H1 (cell line): ENCODE measurements at regions of chr17 and their contacts with region 1.

Region 1: DNA sequence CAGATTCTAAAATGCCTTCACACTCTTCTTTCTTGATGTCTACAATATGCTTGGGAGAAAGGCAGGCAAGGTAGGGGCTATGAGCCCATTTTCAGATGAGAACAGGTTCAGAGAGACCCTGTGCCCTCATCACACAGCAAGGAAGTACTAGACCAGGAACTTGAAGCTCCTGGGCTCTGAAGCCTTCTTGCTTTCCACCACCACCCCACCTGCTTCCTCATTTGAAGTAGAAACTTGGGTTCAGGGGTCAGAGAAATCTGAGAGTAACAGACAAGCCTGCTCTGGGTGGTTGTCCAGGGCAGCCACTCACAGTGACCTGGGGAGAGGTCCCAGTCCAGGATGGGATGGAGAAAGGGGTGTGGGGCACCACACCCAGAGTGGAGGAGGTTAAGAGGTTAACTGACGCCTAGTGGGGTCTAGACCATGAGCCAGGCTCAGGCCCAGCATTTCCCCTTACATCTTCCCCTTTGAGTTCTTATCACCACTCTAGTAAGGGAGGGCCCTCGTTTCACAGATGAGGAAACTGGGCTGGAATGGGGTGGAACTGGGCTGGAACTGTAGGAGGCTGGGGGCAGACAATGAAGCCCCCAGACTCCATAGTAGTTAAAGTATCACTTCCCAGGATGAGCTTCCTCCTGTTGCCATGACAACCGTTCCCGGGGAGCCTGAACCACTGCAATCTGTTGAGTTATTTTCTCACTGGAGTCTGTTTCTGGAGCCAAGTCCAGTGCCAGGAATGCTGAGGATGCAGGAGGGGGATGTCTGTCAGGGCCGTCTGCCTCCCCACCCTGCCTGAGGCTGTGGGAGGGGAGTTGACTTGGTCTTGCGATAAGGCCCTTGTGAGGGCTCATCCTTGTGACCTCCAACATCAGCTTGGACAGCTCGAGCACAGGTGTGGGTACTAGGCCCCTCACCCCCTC is 16.2 kb upstream of the PHF12 start:
- DNase-seq: no peak
- H3K4me3 ChIP-seq: no peak overlapping the region
- H3K27ac ChIP-seq: no peak overlapping the region
- H3K4me1 ChIP-seq: peaks cover 11 to 22% (median 17%) of the 10 kb centered on the region in 4 experiments
- H3K27me3 ChIP-seq: no peaks in the 10 kb centered on the region; a peak in 1 of 7 replicates
- CTCF ChIP-seq: no peak
- EP300 ChIP-seq: no peak
- POLR2A ChIP-seq: no peak
- RAD21 ChIP-seq: no peak

Region 2: GRCh38 chr17:28818819-28819221 is 148.7 kb before region 1 on chr17:
- CTCF ChIA-PET with region 1: no interaction called
- POLR2A ChIA-PET with region 1: no interaction called
- DNase-seq: no peak
- H3K4me3 ChIP-seq: no peak overlapping the region
- H3K27ac ChIP-seq: no peak overlapping the region
- H3K4me1 ChIP-seq: no peaks in the 10 kb centered on the region; a peak in 1 of 7 replicates
- H3K27me3 ChIP-seq: no peaks in the 10 kb centered on the region
- CTCF ChIP-seq: no peak
- EP300 ChIP-seq: no peak
- POLR2A ChIP-seq: no peak
- RAD21 ChIP-seq: no peak

Region 3: GRCh38 chr17:28951991-28952975 is 15.2 kb before region 1 on chr17:
- CTCF ChIA-PET with region 1: interaction called, 62 read pairs
- POLR2A ChIA-PET with region 1: interaction called, 10 read pairs
- DNase-seq: peak; percentile 89 to 96
- H3K4me3 ChIP-seq: peak overlapping the region; percentile 68 to 97 (median 84)
- H3K27ac ChIP-seq: peak overlapping the region; percentile 92
- H3K4me1 ChIP-seq: peaks cover 9 to 28% (median 14%) of the 10 kb centered on the region in 4 experiments; a peak in 5 of 7 replicates
- H3K27me3 ChIP-seq: no peaks in the 10 kb centered on the region
- CTCF ChIP-seq: no peak
- EP300 ChIP-seq: no peak
- POLR2A ChIP-seq: peak; percentile 49 to 60; a peak in 2 of 3 replicates
- RAD21 ChIP-seq: no peak

Region 4: GRCh38 chr17:29005936-29006511 is 38.5 kb after region 1 on chr17 and contains the start of gene SEZ6:
- CTCF ChIA-PET with region 1: interaction called, 17 read pairs
- POLR2A ChIA-PET with region 1: interaction called, 11 read pairs
- DNase-seq: peak; percentile 29 to 94
- H3K4me3 ChIP-seq: peak within 1 kb of the TSS; percentile 36 to 54 (median 45)
- H3K27ac ChIP-seq: no peak within 1 kb of the TSS
- H3K4me1 ChIP-seq: peaks cover 22 to 59% (median 37%) of the 10 kb centered on the region in 4 experiments
- H3K27me3 ChIP-seq: peaks cover 6 to 25% (median 20%) of the 10 kb centered on the region in 4 experiments; a peak in 6 of 7 replicates
- CTCF ChIP-seq: no peak
- EP300 ChIP-seq: peak in 1 of 2 experiments; percentile 87; a peak in 1 of 3 replicates
- POLR2A ChIP-seq: no peak
- RAD21 ChIP-seq: peak; percentile 15 to 28; a peak in 2 of 4 replicates
- total RNA-seq, gene SEZ6: 6.9 and 7.8 TPM in 2 replicates

Region 5: DNA sequence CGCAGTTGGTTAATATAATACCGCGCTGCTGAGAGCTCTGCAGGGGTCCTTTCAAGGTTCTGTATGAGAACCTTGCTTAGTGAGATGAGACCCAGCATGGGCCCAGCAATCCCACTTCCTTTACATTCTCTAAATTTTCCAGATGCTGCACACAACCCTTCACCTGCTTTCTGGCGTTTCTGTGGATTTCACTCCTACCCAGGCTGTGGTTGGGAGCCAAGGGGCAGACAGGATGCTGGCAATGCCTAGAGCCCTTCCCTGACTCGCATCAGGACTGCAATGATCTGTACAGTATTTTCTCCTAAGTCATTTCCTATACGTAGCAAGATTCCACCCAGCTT is 65.3 kb after region 1 on chr17:
- CTCF ChIA-PET with region 1: interaction called, 10 read pairs
- POLR2A ChIA-PET with region 1: interaction called, 10 read pairs
- DNase-seq: no peak
- H3K4me3 ChIP-seq: peak overlapping the region in 2 of 4 experiments; percentile 32 to 47; a peak in 3 of 8 replicates
- H3K27ac ChIP-seq: peak overlapping the region; percentile 72; the same call in 1 of the 2 replicates
- H3K4me1 ChIP-seq: peaks cover 11 to 31% (median 22%) of the 10 kb centered on the region in 4 experiments
- H3K27me3 ChIP-seq: no peaks in the 10 kb centered on the region
- CTCF ChIP-seq: no peak
- EP300 ChIP-seq: peak in 1 of 2 experiments; percentile 64; a peak in 1 of 3 replicates
- POLR2A ChIP-seq: no peak; a peak in 1 of 3 replicates
- RAD21 ChIP-seq: no peak

Region 6: GRCh38 chr17:29048440-29049368 is 81.2 kb after region 1 on chr17:
- CTCF ChIA-PET with region 1: interaction called, 21 read pairs
- POLR2A ChIA-PET with region 1: interaction called, 17 read pairs
- DNase-seq: no peak
- H3K4me3 ChIP-seq: no peak overlapping the region
- H3K27ac ChIP-seq: no peak overlapping the region
- H3K4me1 ChIP-seq: peaks cover 3 to 14% (median 8%) of the 10 kb centered on the region in 4 experiments
- H3K27me3 ChIP-seq: no peaks in the 10 kb centered on the region
- CTCF ChIP-seq: no peak
- EP300 ChIP-seq: no peak
- POLR2A ChIP-seq: no peak
- RAD21 ChIP-seq: no peak

Region 7: GRCh38 chr17:29070781-29071702 is 103.6 kb after region 1 on chr17:
- CTCF ChIA-PET with region 1: interaction called, 30 read pairs
- POLR2A ChIA-PET with region 1: interaction called, 3 read pairs
- DNase-seq: no peak
- H3K4me3 ChIP-seq: no peak overlapping the region
- H3K27ac ChIP-seq: no peak overlapping the region
- H3K4me1 ChIP-seq: peaks cover 9 to 25% (median 13%) of the 10 kb centered on the region in 4 experiments
- H3K27me3 ChIP-seq: 0 out of 7 replicates have a peak, but pooled peaks cover 0 to 2% (median 0%) of the 10 kb centered on the region in 4 experiments
- CTCF ChIP-seq: no peak
- EP300 ChIP-seq: no peak
- POLR2A ChIP-seq: no peak
- RAD21 ChIP-seq: no peak

Region 8: GRCh38 chr17:29084541-29085146 is 117.2 kb after region 1 on chr17:
- CTCF ChIA-PET with region 1: interaction called, 33 read pairs
- POLR2A ChIA-PET with region 1: interaction called, 3 read pairs
- DNase-seq: no peak
- H3K4me3 ChIP-seq: peak overlapping the region in 1 of 4 experiments; percentile 23; a peak in 1 of 8 replicates
- H3K27ac ChIP-seq: no peak overlapping the region
- H3K4me1 ChIP-seq: peaks cover 12 to 36% (median 17%) of the 10 kb centered on the region in 4 experiments
- H3K27me3 ChIP-seq: no peaks in the 10 kb centered on the region; a peak in 1 of 7 replicates
- CTCF ChIP-seq: no peak
- EP300 ChIP-seq: no peak
- POLR2A ChIP-seq: no peak
- RAD21 ChIP-seq: no peak; a peak in 1 of 4 replicates